Right ventricle myocardium superior (tissue), 1 donor: ENCODE measurements at regions of chr2 and their contacts with region 1.

Region 1: GRCh38 chr2:70656421-70657010 is 102.9 kb upstream of the TGFA start:
- DNase-seq: no peak
- ATAC-seq: no peak

Region 2: DNA sequence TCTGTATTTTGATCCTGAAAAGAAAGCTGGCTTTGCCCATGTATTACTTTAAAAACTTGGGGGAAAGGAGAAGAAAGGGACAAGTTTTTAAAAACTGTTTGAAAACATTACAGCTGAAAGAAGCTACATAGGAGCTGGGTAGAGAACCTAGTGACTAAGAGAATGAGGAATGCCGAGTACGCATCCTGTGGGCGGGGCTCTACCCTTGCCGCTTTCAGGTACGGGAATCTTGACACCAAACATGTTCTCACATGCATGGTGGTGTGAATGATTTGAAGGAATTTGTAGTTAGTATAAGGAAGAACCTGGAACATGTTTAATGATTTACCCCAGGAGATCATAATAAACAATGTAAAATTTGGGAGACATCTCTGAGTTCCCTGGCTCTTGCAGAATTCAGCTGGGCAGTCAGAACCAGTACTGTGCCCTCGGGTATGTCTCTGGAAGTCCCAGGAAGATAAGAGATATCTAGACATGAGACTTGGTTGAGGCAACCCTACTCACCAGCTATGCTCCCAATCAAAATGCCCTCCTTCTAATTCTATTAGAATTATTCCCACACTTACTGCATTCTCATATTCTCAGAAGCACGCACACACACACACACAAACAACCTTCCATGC is 86.4 kb before region 1 on chr2:
- intact Hi-C with region 1: no loop called
- DNase-seq: no peak
- ATAC-seq: no peak

Region 3: GRCh38 chr2:70733646-70734180 is 77.2 kb after region 1 on chr2:
- intact Hi-C with region 1: no loop called
- DNase-seq: no peak
- ATAC-seq: no peak

Region 4: GRCh38 chr2:70789304-70790135 is 133.0 kb after region 1 on chr2:
- intact Hi-C with region 1: loop called (anchors 10 kb)
- DNase-seq: peak; percentile 73
- ATAC-seq: peak; percentile 82